ENCODE measurements at regions of chr3 and their contacts with region 1.

Region 1: DNA sequence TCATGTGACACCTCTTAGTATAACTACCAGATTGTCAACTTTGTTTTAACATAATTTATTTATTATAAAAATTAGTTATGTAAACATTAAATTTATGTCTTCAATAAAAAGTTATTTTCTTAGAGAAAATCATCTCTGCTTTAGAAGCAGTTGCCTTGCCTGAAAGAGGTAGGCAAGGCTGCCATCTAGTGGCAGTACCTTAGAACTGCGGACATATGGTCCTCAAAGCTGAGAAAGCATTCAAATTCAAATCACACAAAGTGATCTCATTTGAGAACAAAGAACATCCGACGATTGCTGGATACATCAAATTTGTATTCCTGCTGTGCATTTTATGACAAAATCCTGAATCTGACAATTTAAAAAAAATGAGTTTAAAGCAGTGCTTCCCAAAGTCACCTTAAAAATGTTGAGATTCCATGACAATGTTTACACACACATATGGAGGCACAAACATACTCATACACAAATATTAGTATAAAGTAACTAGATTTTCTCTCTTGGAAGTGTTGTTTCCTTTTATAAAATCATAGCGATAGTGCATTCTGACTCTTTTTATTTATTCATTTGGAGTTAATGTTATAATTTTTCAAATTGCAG is 617.4 kb downstream of the CADM2 start:
- DNase-seq: peak in 1 of 2 donors; percentile 54
- ATAC-seq: peak; percentile 68
- H3K4me3 ChIP-seq: no peak overlapping the region
- H3K27ac ChIP-seq: no peak overlapping the region
- H3K4me1 ChIP-seq: no peaks in the 10 kb centered on the region
- H3K27me3 ChIP-seq: no peaks in the 10 kb centered on the region

Region 2: GRCh38 chr3:84547971-84548970 is 1027.9 kb before region 1 on chr3:
- intact Hi-C with region 1: loop called in 1 of 2 experiments (anchors 10 kb)
- DNase-seq: no peak
- ATAC-seq: peak; percentile 57
- H3K4me3 ChIP-seq: no peak overlapping the region
- H3K27ac ChIP-seq: no peak overlapping the region
- H3K4me1 ChIP-seq: no peaks in the 10 kb centered on the region
- H3K27me3 ChIP-seq: no peaks in the 10 kb centered on the region

Region 3: GRCh38 chr3:85304359-85304964 is 271.7 kb before region 1 on chr3:
- intact Hi-C with region 1: loop called in 1 of 2 experiments (anchors 10 kb)
- DNase-seq: no peak
- ATAC-seq: no peak
- H3K4me3 ChIP-seq: no peak overlapping the region
- H3K27ac ChIP-seq: no peak overlapping the region
- H3K4me1 ChIP-seq: no peaks in the 10 kb centered on the region
- H3K27me3 ChIP-seq: peaks cover 0 to 2% of the 10 kb centered on the region in 2 donors

Region 4: DNA sequence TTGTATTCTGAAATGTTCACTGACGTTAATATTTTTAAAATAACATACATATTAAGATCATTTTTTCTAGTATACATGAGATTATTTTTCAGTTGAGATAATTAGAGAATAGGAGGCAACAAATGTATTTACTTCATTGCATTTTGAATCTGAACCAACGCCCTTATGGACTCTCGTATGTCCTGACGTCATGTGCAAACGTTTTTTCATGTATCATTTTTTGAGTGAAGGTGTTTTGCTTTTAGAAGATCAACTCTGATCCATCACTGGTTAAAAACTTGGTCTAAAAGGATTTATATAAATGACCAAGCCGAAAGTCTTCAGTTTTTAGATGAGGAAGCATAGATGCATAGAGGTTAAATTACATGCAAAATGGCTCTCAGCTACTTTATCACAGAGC is 394.9 kb after region 1 on chr3:
- intact Hi-C with region 1: no loop called
- DNase-seq: no peak
- ATAC-seq: no peak
- H3K4me3 ChIP-seq: no peak overlapping the region
- H3K27ac ChIP-seq: no peak overlapping the region
- H3K4me1 ChIP-seq: no peaks in the 10 kb centered on the region
- H3K27me3 ChIP-seq: no peaks in the 10 kb centered on the region

Region 5: DNA sequence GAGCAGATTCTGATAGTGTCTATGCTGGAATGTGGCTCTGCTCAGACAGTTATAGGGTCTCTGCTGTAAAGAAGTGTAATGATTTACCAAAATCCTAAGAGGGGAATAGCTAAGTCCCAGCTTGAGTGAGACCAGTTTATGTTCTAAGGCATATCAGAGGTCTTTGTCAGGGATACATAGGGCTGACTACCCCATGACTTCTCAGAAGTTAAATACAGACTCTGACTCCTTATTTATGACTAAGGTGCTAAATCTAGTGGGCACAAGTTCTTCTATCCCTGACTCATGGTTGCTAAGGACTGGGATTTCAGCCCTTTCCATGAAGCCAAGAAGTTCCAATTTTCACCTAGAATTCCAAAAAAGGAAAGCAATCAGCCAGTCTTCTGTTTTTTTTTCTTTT is 1892.7 kb after region 1 on chr3:
- intact Hi-C with region 1: no loop called
- DNase-seq: no peak
- ATAC-seq: no peak
- H3K4me3 ChIP-seq: no peak overlapping the region
- H3K27ac ChIP-seq: no peak overlapping the region
- H3K4me1 ChIP-seq: no peaks in the 10 kb centered on the region
- H3K27me3 ChIP-seq: no peaks in the 10 kb centered on the region